Activated CD8-positive, alpha-beta memory T cell treated with anti-CD3 and anti-CD28 coated beads, Interleukin-2, amount 10 ng/mL, durations not matched to agents 7 days and 5 days (primary cell): ENCODE measurements at regions of chr11 and their contacts with region 1.

Region 1: GRCh38 chr11:86193297-86194095 is 51.1 kb upstream of the EED start:
- DNase-seq: peak; percentile 86
- ATAC-seq: peak; percentile 100
- H3K4me3 Mint-ChIP-seq: peak overlapping the region; percentile 70
- H3K27ac Mint-ChIP-seq: peak overlapping the region; percentile 83
- H3K4me1 Mint-ChIP-seq: peaks cover 18% of the 10 kb centered on the region
- H3K27me3 Mint-ChIP-seq: no peaks in the 10 kb centered on the region

Region 2: GRCh38 chr11:85854557-85855340 is 338.7 kb before region 1 on chr11:
- CTCF ChIA-PET with region 1: interaction called, 11 read pairs
- DNase-seq: peak; percentile 94
- ATAC-seq: peak; percentile 95
- H3K4me3 Mint-ChIP-seq: peak overlapping the region; percentile 90
- H3K27ac Mint-ChIP-seq: peak overlapping the region; percentile 93
- H3K4me1 Mint-ChIP-seq: peaks cover 16% of the 10 kb centered on the region
- H3K27me3 Mint-ChIP-seq: no peaks in the 10 kb centered on the region

Region 3: GRCh38 chr11:86068951-86069407 is 124.5 kb before region 1 on chr11 and contains the start of gene PICALM:
- CTCF ChIA-PET with region 1: interaction called, 41 read pairs
- DNase-seq: peak; percentile 99
- ATAC-seq: peak; percentile 89
- H3K4me3 Mint-ChIP-seq: peak within 1 kb of the TSS; percentile 100
- H3K27ac Mint-ChIP-seq: peak within 1 kb of the TSS; percentile 92
- H3K4me1 Mint-ChIP-seq: peaks cover 25% of the 10 kb centered on the region
- H3K27me3 Mint-ChIP-seq: no peaks in the 10 kb centered on the region
- total RNA-seq, gene PICALM: 123 to 166 TPM

Region 4: GRCh38 chr11:86091566-86091965 is 101.9 kb before region 1 on chr11:
- CTCF ChIA-PET with region 1: no interaction called
- DNase-seq: no peak
- ATAC-seq: no peak
- H3K4me3 Mint-ChIP-seq: no peak overlapping the region
- H3K27ac Mint-ChIP-seq: no peak overlapping the region
- H3K4me1 Mint-ChIP-seq: no peaks in the 10 kb centered on the region
- H3K27me3 Mint-ChIP-seq: no peaks in the 10 kb centered on the region

Region 5: GRCh38 chr11:86159581-86159891 is 34.0 kb before region 1 on chr11:
- CTCF ChIA-PET with region 1: interaction called, 10 read pairs
- DNase-seq: no peak
- ATAC-seq: no peak
- H3K4me3 Mint-ChIP-seq: no peak overlapping the region
- H3K27ac Mint-ChIP-seq: no peak overlapping the region
- H3K4me1 Mint-ChIP-seq: peaks cover 29% of the 10 kb centered on the region
- H3K27me3 Mint-ChIP-seq: no peaks in the 10 kb centered on the region

Region 6: DNA sequence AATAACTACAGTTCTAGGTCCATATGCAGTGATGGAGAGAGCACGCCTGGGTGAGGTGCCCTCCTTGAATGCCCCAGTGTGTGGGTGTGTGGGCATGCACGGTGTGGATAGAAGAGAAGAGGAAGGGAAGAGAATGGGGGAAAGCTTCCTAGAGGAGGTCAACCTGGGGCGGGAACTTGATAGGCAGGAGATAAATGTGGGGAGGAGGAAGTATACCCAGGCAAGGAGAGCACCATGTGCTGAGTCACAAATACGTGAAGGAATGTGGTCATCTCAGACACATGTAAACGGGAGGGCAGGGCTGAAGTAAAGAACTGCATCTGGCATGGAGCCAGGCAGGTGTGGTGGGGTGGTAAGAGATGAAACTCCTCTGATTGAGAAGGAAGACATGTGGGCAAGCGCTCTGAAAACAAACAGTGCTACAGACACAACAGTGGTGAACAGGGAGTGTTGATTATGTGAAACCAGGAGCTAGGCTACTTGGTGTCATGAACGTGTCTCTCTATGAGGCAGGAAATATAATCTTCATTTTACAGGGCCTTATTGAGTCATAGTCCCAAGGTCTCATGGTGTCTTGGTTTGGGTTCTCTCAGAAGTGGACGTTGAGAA is 10.4 kb before region 1 on chr11:
- CTCF ChIA-PET with region 1: interaction called, 27 read pairs
- DNase-seq: peak; percentile 89
- ATAC-seq: peak; percentile 83
- H3K4me3 Mint-ChIP-seq: no peak overlapping the region
- H3K27ac Mint-ChIP-seq: no peak overlapping the region
- H3K4me1 Mint-ChIP-seq: peaks cover 16% of the 10 kb centered on the region
- H3K27me3 Mint-ChIP-seq: no peaks in the 10 kb centered on the region

Region 7: GRCh38 chr11:86314646-86315045 is 121.2 kb after region 1 on chr11:
- CTCF ChIA-PET with region 1: no interaction called
- DNase-seq: no peak
- ATAC-seq: no peak
- H3K4me3 Mint-ChIP-seq: no peak overlapping the region
- H3K27ac Mint-ChIP-seq: no peak overlapping the region
- H3K4me1 Mint-ChIP-seq: peaks cover 6% of the 10 kb centered on the region
- H3K27me3 Mint-ChIP-seq: no peaks in the 10 kb centered on the region

Region 8: GRCh38 chr11:86418917-86419316 is 225.4 kb after region 1 on chr11:
- CTCF ChIA-PET with region 1: no interaction called
- DNase-seq: no peak
- ATAC-seq: peak; percentile 76
- H3K4me3 Mint-ChIP-seq: no peak overlapping the region
- H3K27ac Mint-ChIP-seq: no peak overlapping the region
- H3K4me1 Mint-ChIP-seq: peaks cover 10% of the 10 kb centered on the region
- H3K27me3 Mint-ChIP-seq: no peaks in the 10 kb centered on the region